Tibial artery (tissue), 4 donors: ENCODE measurements at regions of chr3 and their contacts with region 1.

Region 1: GRCh38 chr3:159616212-159616825 is 372.3 kb upstream of the IL12A start:
- DNase-seq: peak in 1 of 2 donors; percentile 68
- H3K4me3 ChIP-seq: no peak overlapping the region
- H3K27ac ChIP-seq: no peak overlapping the region
- H3K4me1 ChIP-seq: peaks cover 0 to 22% (median 0%) of the 10 kb centered on the region in 4 donors
- H3K27me3 ChIP-seq: no peaks in the 10 kb centered on the region
- CTCF ChIP-seq: peak; percentile 71 to 81

Region 2: DNA sequence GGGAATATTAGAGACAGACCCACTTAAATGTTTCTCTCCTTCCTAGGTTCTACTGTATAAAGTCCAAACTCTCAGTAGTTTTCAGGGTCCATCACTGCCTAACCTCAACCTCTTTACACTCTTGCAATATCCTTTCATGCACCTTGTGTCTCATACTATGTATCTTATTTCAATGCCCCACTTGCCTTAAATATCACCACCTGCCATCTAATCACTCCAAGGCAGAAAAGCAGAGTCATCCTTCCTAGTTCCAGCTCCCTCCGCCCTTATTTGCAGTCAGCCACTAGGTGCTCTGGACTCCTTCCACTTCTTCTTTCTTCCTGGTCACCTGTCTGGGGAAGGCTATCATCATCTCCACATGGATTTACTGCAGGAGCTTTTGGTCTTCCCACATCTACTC is 492.4 kb before region 1 on chr3:
- intact Hi-C with region 1: no loop called
- DNase-seq: no peak
- H3K4me3 ChIP-seq: no peak overlapping the region
- H3K27ac ChIP-seq: no peak overlapping the region
- H3K4me1 ChIP-seq: no peaks in the 10 kb centered on the region
- H3K27me3 ChIP-seq: no peaks in the 10 kb centered on the region
- CTCF ChIP-seq: no peak

Region 3: DNA sequence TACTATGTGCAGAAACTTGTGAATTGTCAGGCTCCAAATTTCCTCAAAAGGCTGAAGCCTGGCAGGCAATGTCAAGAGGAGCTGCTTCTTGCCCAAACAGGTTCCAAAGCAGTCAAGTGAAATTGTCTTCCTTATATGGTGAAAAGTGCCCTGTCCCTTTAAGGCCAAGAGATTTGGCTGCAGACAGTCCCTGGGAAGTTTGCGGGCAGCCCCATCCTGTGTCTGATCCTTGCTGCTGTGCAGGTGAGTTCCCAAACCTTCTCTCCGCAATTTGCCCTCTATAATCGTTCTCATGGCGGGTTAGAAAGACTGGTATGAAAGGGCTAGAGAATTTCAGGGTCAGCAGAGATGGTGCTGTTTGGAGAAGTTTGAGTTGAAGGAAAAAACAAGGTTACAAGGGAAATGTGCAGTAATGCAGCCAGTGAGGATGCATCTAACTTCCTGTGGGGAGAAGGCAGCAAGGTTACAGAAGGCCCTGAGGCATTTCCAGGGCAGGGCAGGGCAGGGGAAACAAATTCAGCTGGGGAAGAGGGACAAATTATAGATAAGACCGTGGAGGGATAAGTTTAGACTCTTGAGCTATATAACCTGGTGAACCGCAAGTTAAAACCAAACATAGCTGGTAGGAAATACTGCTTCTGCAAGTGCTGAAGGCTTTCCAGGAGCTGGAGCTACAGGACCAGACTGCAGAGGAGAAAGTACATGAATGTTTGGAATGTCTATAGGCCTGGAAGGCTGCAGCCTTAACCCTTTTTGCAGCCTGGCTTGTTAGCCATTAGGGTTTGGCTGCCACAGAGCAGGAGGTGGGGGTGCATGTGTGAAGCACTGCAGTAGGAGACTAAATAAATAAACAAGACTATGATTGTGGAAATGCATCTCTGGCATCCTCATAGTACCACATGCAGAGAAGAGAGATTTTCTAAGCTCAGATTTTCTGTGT is 116.1 kb after region 1 on chr3:
- intact Hi-C with region 1: loop called (anchors 10 kb)
- DNase-seq: no peak
- H3K4me3 ChIP-seq: peak overlapping the region; percentile 34 to 45
- H3K27ac ChIP-seq: peak overlapping the region; percentile 36 to 68
- H3K4me1 ChIP-seq: peaks cover 0 to 28% (median 13%) of the 10 kb centered on the region in 4 donors
- H3K27me3 ChIP-seq: no peaks in the 10 kb centered on the region
- CTCF ChIP-seq: no peak

Region 4: DNA sequence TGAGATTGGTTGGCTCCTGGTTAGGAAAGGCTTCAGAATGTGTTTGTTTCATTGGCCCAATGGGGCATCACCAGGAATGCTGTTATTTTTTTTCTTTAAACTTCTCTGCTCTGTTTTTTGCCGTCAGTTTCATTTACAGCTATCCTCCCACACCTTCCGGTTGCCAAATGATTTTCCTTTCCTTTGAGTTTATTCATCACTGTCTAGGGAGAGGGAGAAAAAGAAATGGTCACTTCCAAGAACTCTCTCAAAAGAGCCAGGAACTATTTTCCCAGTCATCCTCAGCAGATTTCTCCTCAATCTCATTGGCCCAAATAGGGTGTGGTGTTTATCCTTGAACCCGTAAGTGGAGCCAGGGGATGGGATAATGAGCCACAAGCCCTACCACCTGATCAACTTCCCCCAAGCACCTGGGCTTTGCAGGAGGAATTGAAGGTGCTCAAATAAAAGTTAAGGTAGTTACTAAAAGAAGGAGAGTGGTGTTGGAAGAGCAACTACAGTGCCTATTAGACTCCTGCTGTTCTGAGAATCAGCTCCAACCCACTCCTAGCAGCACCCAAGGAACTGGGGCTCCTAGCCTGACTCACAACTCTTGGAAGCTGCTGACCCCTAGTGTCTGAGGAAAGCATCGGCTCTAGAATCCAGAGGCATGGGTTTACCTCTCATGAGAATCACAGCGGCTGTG is 188.5 kb after region 1 on chr3:
- intact Hi-C with region 1: loop called (anchors 1 kb)
- DNase-seq: peak; percentile 73 to 83
- H3K4me3 ChIP-seq: peak overlapping the region in 1 of 2 donors; percentile 15
- H3K27ac ChIP-seq: peak overlapping the region; percentile 48 to 87
- H3K4me1 ChIP-seq: peaks cover 0 to 89% (median 23%) of the 10 kb centered on the region in 4 donors
- H3K27me3 ChIP-seq: no peaks in the 10 kb centered on the region
- CTCF ChIP-seq: peak; percentile 87 to 88